HCT116 (cell line): ENCODE measurements at regions of chr17 and their contacts with region 1.

Region 1: DNA sequence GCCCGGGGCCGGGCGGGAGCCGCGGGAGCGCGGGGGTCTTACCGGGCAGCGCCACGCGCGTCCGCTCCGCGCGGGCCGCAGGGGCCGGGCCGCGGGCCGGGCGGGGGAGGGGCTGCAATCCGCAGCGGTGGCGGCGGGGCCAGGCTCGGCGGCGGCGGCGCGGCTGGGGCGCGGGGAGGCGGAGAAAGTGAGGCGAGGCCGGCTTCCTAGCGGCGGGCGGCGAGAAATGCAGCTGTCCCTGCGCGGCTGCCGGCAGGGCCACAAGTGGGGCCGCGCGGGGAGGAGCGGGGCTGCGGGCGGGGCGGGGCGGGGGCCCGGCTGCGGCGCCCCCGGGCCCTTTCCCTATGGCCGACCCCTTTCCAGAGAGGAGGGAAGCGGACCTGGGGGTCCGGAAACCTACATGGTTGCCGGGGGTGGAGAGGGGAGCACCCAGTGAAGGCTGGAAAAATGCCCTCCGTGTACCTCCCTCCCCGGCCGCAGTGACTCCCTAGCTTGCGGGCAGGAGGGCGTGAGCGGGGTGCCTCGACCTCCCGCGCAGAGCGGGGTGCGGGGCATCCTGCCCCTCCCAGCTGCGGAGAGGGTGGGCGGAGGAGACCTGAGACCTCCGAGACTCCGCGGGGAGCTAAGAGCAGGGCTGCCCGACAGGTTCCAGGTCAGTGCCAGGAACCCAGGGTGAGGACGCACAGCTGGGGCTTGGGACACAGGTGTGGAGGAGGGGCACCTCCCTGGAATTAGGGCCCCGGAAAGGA is at the start of gene CUEDC1:
- DNase-seq: no peak
- ATAC-seq: peak; percentile 67
- H3K4me3 ChIP-seq: peak within 1 kb of the TSS; percentile 75
- H3K27ac ChIP-seq: peak within 1 kb of the TSS; percentile 97
- H3K4me1 ChIP-seq: peaks cover 57 to 66% of the 10 kb centered on the region in 2 experiments
- H3K27me3 ChIP-seq: no peaks in the 10 kb centered on the region
- CTCF ChIP-seq: no peak
- POLR2A ChIP-seq: peak; percentile 48
- RAD21 ChIP-seq: no peak
- total RNA-seq, gene CUEDC1: 60.2 TPM

Region 2: DNA sequence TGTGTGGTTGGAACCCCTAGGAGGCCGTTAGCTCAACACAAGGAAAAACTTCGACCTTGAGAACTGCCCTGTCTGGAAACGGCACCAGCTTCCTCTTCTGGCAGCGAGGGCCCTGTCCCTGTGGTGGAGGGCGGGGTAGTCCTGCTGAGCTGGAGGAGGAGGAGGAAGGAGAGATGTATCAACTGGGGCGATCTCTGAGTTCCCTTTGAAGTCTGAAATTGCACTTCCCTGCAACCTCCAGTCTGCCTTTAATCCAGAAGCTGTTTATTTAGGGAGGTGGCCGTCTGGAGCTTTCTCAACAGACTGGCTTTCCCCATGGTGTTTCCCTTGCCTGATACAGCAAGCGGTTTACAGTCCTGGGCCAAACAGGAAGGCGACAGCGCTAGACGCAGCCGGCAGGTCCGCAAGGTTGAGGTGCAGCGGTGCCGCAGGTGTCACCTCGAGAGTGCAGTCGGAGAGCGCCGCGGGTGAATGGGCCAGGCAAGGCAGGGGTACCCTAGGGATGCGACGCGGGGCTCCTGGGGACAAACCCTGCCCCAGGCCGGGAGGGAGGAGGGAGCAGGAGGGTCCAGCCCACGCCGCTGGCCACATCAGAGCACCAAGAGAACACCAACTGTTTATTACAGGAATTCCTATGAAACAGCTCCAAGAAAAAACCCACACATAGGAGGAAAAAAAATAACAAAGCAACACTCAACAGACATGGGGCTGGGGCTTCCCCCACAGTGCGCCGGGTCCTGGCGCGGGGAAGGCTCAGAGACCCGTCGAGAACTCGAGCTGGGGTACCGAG is 94.2 kb before region 1 on chr17:
- CTCF ChIA-PET with region 1: interaction called, 5 read pairs
- POLR2A ChIA-PET with region 1: interaction called, 4 read pairs
- RAD21 ChIA-PET with region 1: interaction called, 4 to 6 read pairs
- intact Hi-C with region 1: loop called (anchors 2 kb)
- DNase-seq: peak; percentile 75
- ATAC-seq: peak; percentile 68
- H3K4me3 ChIP-seq: peak overlapping the region; percentile 38 to 51
- H3K27ac ChIP-seq: peak overlapping the region; percentile 79
- H3K4me1 ChIP-seq: peaks cover 54 to 80% of the 10 kb centered on the region in 2 experiments
- H3K27me3 ChIP-seq: no peaks in the 10 kb centered on the region
- CTCF ChIP-seq: 0 out of 6 replicates have a peak, but pooled peaks of 1 of the 3 experiments have one; percentile 5
- POLR2A ChIP-seq: no peak
- RAD21 ChIP-seq: no peak

Region 3: DNA sequence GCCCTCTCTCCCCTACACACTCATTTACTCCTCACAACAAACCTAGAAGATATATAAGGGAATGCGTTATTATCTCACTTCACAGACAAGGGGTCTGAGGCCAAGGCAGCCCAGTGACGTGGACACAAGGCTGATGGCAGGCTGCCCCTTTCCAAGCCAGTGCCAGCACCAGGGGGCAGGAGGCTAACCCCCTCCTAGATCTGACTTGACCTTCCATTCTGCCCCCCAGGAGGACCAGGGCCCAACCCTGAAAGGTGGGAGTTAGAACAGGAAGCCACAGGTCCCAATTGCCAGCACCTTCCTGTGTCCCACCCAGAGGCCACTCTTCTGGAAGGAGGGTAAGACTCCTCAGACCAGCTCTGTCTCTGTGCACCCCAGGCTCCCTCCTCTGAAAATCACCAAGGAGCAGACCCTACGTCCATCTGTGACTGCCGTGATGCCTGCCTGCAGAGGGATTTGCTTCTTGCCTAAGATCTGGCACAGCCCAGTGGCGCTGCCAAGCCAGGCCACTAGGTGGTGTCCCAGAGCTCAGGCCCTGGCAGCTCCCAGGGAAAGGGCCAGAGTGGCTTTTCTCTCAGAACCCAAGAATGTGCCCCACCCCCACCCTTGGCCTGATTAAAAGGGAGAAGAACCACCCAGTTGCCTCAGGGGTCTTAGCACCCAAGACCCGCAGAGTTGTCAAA is 63.1 kb before region 1 on chr17:
- CTCF ChIA-PET with region 1: interaction called, 14 read pairs
- POLR2A ChIA-PET with region 1: interaction called, 11 read pairs
- RAD21 ChIA-PET with region 1: interaction called in 1 of 2 experiments, 3 read pairs
- intact Hi-C with region 1: loop called (anchors 5 kb)
- DNase-seq: peak; percentile 81
- ATAC-seq: peak; percentile 71
- H3K4me3 ChIP-seq: peak overlapping the region; percentile 27 to 40
- H3K27ac ChIP-seq: peak overlapping the region; percentile 82
- H3K4me1 ChIP-seq: peaks cover 67 to 83% of the 10 kb centered on the region in 2 experiments
- H3K27me3 ChIP-seq: no peaks in the 10 kb centered on the region
- CTCF ChIP-seq: peak in 2 of 3 experiments; percentile 99 to 100; a peak in 4 of 6 replicates
- POLR2A ChIP-seq: no peak
- RAD21 ChIP-seq: no peak

Region 4: DNA sequence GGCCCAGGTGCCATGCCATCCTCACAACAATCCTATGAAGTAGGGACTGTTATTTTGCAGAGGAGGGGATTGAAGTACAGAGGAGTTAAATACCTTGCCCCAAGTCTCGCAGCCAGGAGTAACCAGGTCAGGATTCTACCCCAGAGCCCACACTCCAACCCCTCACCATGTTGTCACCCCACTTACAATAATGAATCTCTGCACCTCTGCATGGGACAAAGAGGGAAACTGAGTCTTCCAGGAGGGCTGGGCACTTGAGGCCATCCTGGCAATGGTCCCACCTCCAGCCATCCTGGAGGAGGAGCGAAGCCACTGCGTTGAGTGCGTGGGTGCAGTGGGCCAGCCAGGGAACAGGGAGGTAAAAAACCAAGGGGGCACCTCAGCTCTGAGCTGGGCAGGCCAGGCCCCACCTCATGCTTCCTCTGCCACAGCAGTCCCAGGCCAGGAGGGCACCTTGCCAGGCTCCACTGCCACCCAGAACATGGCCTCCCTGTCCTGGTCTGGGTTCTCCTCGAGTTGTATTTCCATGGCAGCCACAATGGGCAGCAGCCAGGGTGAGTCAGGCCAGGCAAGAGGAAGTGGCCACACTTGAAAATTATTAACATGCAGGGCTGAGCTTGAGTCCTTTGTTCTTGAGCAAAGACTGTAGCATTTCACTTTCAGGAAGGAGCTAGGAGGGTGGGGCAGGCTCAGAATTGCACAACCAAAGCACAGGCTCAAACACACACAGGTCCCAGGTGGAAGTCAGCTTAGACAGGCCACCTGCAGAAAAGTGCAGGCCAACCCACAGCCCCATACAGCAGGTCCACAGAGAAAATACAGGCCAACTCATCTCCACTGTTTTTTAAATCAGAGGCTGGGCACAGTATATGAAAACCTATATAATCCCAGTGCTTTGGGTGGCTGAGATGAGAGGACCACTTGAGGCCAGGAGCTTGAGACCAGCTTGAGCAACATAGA is 52.3 kb before region 1 on chr17:
- CTCF ChIA-PET with region 1: interaction called, 5 read pairs
- POLR2A ChIA-PET with region 1: interaction called, 16 read pairs
- RAD21 ChIA-PET with region 1: interaction called, 3 read pairs
- intact Hi-C with region 1: loop called (anchors 5 kb)
- DNase-seq: peak; percentile 92
- ATAC-seq: peak; percentile 63
- H3K4me3 ChIP-seq: peak overlapping the region in 1 of 2 experiments; percentile 31; a peak in 2 of 4 replicates
- H3K27ac ChIP-seq: peak overlapping the region; percentile 60
- H3K4me1 ChIP-seq: peaks cover 80 to 98% of the 10 kb centered on the region in 2 experiments
- H3K27me3 ChIP-seq: no peaks in the 10 kb centered on the region
- CTCF ChIP-seq: no peak
- POLR2A ChIP-seq: no peak
- RAD21 ChIP-seq: peak; percentile 46

Region 5: GRCh38 chr17:57939797-57940196 is 15.6 kb before region 1 on chr17:
- CTCF ChIA-PET with region 1: interaction called, 10 read pairs
- POLR2A ChIA-PET with region 1: interaction called, 15 read pairs
- RAD21 ChIA-PET with region 1: interaction called in 1 of 2 experiments, 3 read pairs
- intact Hi-C with region 1: no loop called
- DNase-seq: no peak
- ATAC-seq: no peak
- H3K4me3 ChIP-seq: no peak overlapping the region
- H3K27ac ChIP-seq: peak overlapping the region; percentile 23
- H3K4me1 ChIP-seq: peaks cover 79 to 96% of the 10 kb centered on the region in 2 experiments
- H3K27me3 ChIP-seq: no peaks in the 10 kb centered on the region
- CTCF ChIP-seq: no peak
- POLR2A ChIP-seq: no peak
- RAD21 ChIP-seq: no peak

Region 6: DNA sequence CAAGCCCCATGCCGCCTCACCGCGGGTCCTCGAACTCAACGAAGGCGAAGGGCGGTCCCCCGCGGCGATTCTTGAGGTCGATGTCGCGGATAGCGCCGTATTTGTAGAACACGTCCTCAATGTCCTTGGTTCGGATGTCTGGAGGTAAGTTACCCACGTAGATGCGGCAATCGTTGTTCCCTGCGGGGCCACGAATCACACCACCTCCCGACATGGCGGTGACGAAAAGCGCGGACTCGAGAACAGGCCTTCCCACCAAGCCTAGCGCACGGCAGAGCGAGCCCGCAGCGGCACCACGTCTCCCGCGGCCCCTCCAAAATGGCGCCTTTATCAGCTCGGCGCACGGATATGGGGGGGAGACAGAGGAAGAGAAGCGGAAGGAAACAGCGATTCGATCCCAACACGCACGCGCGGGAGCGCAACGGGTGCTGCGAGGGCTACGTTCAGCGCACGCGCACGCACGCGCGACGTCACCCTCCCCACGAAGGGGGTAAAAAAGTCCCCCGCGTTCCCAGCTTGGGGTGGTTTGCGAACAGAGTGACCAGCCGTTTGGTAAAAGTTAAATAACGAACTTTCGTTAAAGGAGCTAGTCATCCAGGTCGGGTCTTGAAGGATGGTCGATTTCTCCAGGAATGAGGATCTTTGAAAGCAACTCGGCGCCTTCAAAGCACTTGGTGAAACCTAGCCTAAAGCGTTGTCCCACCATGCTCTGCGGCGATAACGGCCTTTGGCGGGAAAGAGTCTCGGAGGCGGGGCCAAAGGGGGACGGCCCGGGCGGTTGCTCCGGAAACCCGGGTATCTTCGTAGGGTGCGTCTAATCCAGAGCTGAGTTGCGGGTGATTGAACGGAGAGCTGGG is 51.8 kb after region 1 on chr17 and contains the start of gene SRSF1:
- CTCF ChIA-PET with region 1: no interaction called
- POLR2A ChIA-PET with region 1: interaction called, 11 read pairs
- RAD21 ChIA-PET with region 1: no interaction called
- intact Hi-C with region 1: no loop called
- DNase-seq: peak; percentile 99
- ATAC-seq: peak; percentile 86
- H3K4me3 ChIP-seq: peak within 1 kb of the TSS; percentile 88 to 94
- H3K27ac ChIP-seq: peak within 1 kb of the TSS; percentile 100
- H3K4me1 ChIP-seq: peaks cover 24 to 41% of the 10 kb centered on the region in 2 experiments
- H3K27me3 ChIP-seq: no peaks in the 10 kb centered on the region
- CTCF ChIP-seq: no peak
- POLR2A ChIP-seq: peak; percentile 85
- RAD21 ChIP-seq: no peak
- total RNA-seq, gene SRSF1: 434 TPM